Activated T-helper 1 cell treated with anti-CD3 and anti-CD28 coated beads, Interleukin-12 subunit alpha, Interleukin-12 subunit beta, Interleukin-2, Interleukin-4 antibody, amounts not matched to agents 30 ng/mL and 10 ng/mL and 1 ng/mL, durations not matched to agents 14 hours and 24 hours and 36 hours (primary cell): ENCODE measurements at regions of chr18 and their contacts with region 1.

Region 1: DNA sequence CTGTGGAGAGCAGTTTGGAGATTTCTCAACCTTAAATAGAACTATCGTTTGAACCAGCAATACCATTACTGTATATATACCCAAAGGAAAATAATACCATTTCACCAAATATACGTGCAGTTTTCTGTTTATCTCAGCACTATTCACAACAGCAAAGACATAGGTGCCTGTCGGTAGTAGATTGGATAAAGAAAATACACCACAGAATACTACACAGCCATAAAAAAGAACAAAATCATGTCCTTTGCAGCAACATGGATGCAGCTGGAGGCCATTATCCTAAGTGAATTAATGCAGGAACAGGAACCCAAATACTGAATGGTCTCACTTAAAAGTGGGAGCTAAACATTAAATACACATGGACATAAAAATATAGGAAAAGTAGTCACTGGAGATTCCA is 81.3 kb downstream of the SMCHD1 start:
- DNase-seq: no peak
- H3K4me3 Mint-ChIP-seq: no peak overlapping the region
- H3K27ac Mint-ChIP-seq: no peak overlapping the region
- H3K4me1 Mint-ChIP-seq: peaks cover 8% of the 10 kb centered on the region
- H3K27me3 Mint-ChIP-seq: no peaks in the 10 kb centered on the region

Region 2: GRCh38 chr18:2780750-2781149 is 43.9 kb after region 1 on chr18:
- intact Hi-C with region 1: loop called (anchors 5 kb)
- DNase-seq: no peak
- H3K4me3 Mint-ChIP-seq: no peak overlapping the region
- H3K27ac Mint-ChIP-seq: no peak overlapping the region
- H3K4me1 Mint-ChIP-seq: peaks cover 12% of the 10 kb centered on the region
- H3K27me3 Mint-ChIP-seq: no peaks in the 10 kb centered on the region

Region 3: DNA sequence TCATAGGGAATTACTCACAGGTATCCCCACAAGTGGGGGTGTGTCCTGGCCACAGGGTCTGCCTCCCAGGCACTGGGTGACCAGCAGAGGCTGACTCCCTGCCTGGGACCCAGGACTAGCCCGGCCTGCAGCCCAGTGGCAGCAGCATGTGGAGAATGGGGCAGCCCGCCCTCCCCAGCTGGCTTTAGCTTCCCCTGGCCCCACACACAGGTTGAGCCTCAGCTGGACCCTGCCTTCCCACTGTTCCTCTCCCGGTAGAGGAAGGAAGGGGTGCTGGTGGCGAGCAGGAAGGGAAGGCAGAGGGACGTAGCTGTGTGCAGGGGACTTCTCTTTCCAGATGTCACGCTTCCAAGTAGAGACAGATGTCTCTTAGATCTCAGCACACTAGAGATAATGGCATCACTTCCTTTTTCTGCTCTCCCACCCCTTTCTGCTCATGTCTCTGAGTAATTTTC is 161.4 kb after region 1 on chr18:
- intact Hi-C with region 1: no loop called
- DNase-seq: no peak
- H3K4me3 Mint-ChIP-seq: no peak overlapping the region
- H3K27ac Mint-ChIP-seq: no peak overlapping the region
- H3K4me1 Mint-ChIP-seq: peaks cover 18% of the 10 kb centered on the region
- H3K27me3 Mint-ChIP-seq: no peaks in the 10 kb centered on the region